HCT116 (cell line): ENCODE measurements at regions of chr17 and their contacts with region 1.

Region 1: DNA sequence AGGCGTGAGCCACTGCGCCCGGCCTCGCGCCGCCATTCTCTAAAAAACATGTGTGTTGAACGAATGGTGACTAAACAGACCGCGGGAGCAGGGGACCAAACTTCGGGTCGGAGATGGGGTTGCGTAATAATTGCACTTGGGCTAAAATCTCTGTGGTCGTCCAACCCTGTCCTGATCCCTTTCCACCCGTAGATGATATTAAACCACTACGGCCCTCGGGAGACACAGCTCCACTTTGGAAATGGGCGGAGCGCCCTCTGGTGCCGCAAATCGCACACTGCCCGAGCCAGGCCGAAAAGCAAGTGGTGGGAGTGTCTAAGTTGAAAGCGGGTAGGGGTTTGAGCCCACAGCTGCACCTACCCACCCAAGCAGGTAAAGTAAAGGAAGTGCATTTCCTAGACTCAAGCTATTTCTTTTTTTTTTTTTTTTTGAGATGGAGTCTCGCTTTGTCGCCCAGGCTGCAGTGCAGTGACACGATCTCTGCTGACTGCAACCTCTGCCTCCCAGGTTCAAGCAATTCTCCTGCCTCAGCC is 17.0 kb downstream of the CAVIN1 start:
- DNase-seq: no peak
- ATAC-seq: peak; percentile 66
- H3K4me3 ChIP-seq: no peak overlapping the region
- H3K27ac ChIP-seq: no peak overlapping the region
- H3K4me1 ChIP-seq: peaks cover 39 to 68% of the 10 kb centered on the region in 2 experiments
- H3K27me3 ChIP-seq: no peaks in the 10 kb centered on the region
- CTCF ChIP-seq: peak; percentile 85 to 95 (median 91)
- POLR2A ChIP-seq: no peak
- RAD21 ChIP-seq: peak; percentile 95

Region 2: GRCh38 chr17:42294469-42295398 is 111.3 kb before region 1 on chr17:
- CTCF ChIA-PET with region 1: no interaction called
- POLR2A ChIA-PET with region 1: no interaction called
- RAD21 ChIA-PET with region 1: no interaction called
- intact Hi-C with region 1: no loop called
- DNase-seq: no peak
- ATAC-seq: no peak
- H3K4me3 ChIP-seq: no peak overlapping the region
- H3K27ac ChIP-seq: no peak overlapping the region
- H3K4me1 ChIP-seq: no peaks in the 10 kb centered on the region
- H3K27me3 ChIP-seq: no peaks in the 10 kb centered on the region
- CTCF ChIP-seq: no peak
- POLR2A ChIP-seq: no peak
- RAD21 ChIP-seq: no peak

Region 3: GRCh38 chr17:42322382-42323267 is 83.4 kb before region 1 on chr17:
- CTCF ChIA-PET with region 1: interaction called, 17 read pairs
- POLR2A ChIA-PET with region 1: no interaction called
- RAD21 ChIA-PET with region 1: interaction called, 4 to 6 read pairs
- intact Hi-C with region 1: loop called (anchors 1 kb)
- DNase-seq: peak; percentile 85
- ATAC-seq: peak; percentile 86
- H3K4me3 ChIP-seq: no peak overlapping the region
- H3K27ac ChIP-seq: no peak overlapping the region
- H3K4me1 ChIP-seq: peaks cover 18 to 38% of the 10 kb centered on the region in 2 experiments
- H3K27me3 ChIP-seq: no peaks in the 10 kb centered on the region
- CTCF ChIP-seq: peak; percentile 99 to 100 (median 100)
- POLR2A ChIP-seq: no peak
- RAD21 ChIP-seq: peak; percentile 99

Region 4: GRCh38 chr17:42388381-42389134 is 17.5 kb before region 1 on chr17 and contains the start of gene STAT3:
- CTCF ChIA-PET with region 1: interaction called, 20 read pairs
- POLR2A ChIA-PET with region 1: interaction called, 7 read pairs
- RAD21 ChIA-PET with region 1: interaction called, 3 read pairs
- intact Hi-C with region 1: no loop called
- DNase-seq: peak; percentile 99
- ATAC-seq: peak; percentile 98
- H3K4me3 ChIP-seq: peak within 1 kb of the TSS; percentile 86 to 87
- H3K27ac ChIP-seq: peak within 1 kb of the TSS; percentile 66
- H3K4me1 ChIP-seq: peaks cover 19 to 25% of the 10 kb centered on the region in 2 experiments
- H3K27me3 ChIP-seq: no peaks in the 10 kb centered on the region
- CTCF ChIP-seq: no peak
- POLR2A ChIP-seq: peak; percentile 49
- RAD21 ChIP-seq: peak; percentile 24; the same call in 1 of the 2 replicates
- total RNA-seq, gene STAT3: 61.0 TPM

Region 5: GRCh38 chr17:42422958-42423712 is 17.1 kb after region 1 on chr17 and contains the start of gene CAVIN1:
- CTCF ChIA-PET with region 1: interaction called, 6 read pairs
- POLR2A ChIA-PET with region 1: interaction called, 88 read pairs
- RAD21 ChIA-PET with region 1: interaction called in 1 of 2 experiments, 5 read pairs
- intact Hi-C with region 1: loop called (anchors 2 kb)
- DNase-seq: peak; percentile 85
- ATAC-seq: peak; percentile 79
- H3K4me3 ChIP-seq: peak within 1 kb of the TSS; percentile 90 to 94
- H3K27ac ChIP-seq: peak within 1 kb of the TSS; percentile 99
- H3K4me1 ChIP-seq: peaks cover 33 to 63% of the 10 kb centered on the region in 2 experiments
- H3K27me3 ChIP-seq: no peaks in the 10 kb centered on the region
- CTCF ChIP-seq: no peak
- POLR2A ChIP-seq: peak; percentile 97
- RAD21 ChIP-seq: no peak
- total RNA-seq, gene CAVIN1: 79.7 TPM

Region 6: DNA sequence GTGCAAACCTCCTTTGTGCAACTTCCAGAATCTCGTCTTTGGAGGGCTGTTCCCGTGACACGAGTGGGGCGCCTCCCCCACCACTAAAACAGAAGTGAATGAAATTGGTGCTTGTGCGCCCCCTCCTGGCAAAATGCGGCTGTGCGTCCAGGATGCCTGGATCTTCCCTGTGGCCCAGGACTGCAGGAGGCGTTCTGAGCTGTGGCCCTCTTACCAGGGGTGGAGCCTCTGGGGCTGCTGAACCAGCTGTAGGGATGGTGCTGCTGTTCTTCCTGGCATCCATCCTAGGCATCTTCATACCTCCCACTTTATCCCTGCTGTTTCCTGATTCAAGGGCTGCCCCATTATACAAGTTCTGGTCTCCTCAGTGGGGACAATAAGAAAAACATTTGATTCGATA is 111.5 kb after region 1 on chr17:
- CTCF ChIA-PET with region 1: interaction called, 8 read pairs
- POLR2A ChIA-PET with region 1: interaction called, 11 read pairs
- RAD21 ChIA-PET with region 1: interaction called in 1 of 2 experiments, 3 read pairs
- intact Hi-C with region 1: loop called (anchors 5 kb)
- DNase-seq: peak; percentile 56
- ATAC-seq: peak; percentile 75
- H3K4me3 ChIP-seq: no peak overlapping the region
- H3K27ac ChIP-seq: peak overlapping the region; percentile 93
- H3K4me1 ChIP-seq: peaks cover 39 to 52% of the 10 kb centered on the region in 2 experiments
- H3K27me3 ChIP-seq: no peaks in the 10 kb centered on the region
- CTCF ChIP-seq: peak; percentile 95 to 98 (median 97)
- POLR2A ChIP-seq: no peak
- RAD21 ChIP-seq: peak; percentile 91

Region 7: DNA sequence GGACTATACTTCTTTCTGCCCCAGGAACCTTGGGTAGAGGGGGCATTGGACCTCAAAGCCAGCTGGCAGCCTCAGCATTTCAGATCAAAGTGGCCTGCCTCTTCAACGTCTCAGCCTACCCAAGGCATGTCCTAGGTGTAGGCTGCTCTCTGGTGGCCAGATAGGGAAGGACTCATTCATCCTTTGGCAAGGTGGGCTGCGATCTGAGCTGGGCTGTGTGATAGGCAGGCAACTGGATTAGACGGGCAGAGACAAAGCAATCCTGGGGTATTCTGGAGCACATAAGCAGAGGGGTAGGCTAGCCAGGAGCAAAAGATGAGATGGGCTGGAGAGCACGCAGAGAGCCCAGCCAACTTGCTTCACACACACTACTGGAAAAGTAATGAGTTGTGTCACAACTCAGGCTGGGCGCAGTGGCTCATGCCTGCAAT is 121.3 kb after region 1 on chr17:
- CTCF ChIA-PET with region 1: interaction called, 16 read pairs
- POLR2A ChIA-PET with region 1: interaction called, 6 read pairs
- RAD21 ChIA-PET with region 1: interaction called in 1 of 2 experiments, 5 read pairs
- intact Hi-C with region 1: no loop called
- DNase-seq: peak; percentile 69
- ATAC-seq: peak; percentile 92
- H3K4me3 ChIP-seq: no peak overlapping the region
- H3K27ac ChIP-seq: no peak overlapping the region
- H3K4me1 ChIP-seq: peaks cover 27 to 66% of the 10 kb centered on the region in 2 experiments
- H3K27me3 ChIP-seq: no peaks in the 10 kb centered on the region
- CTCF ChIP-seq: peak; percentile 86 to 95 (median 91)
- POLR2A ChIP-seq: no peak
- RAD21 ChIP-seq: peak; percentile 97